Activated B cell treated with CpG ODN at 0.5 μM for 24 hours (primary cell): ENCODE measurements at regions of chr15 and their contacts with region 1.

Region 1: DNA sequence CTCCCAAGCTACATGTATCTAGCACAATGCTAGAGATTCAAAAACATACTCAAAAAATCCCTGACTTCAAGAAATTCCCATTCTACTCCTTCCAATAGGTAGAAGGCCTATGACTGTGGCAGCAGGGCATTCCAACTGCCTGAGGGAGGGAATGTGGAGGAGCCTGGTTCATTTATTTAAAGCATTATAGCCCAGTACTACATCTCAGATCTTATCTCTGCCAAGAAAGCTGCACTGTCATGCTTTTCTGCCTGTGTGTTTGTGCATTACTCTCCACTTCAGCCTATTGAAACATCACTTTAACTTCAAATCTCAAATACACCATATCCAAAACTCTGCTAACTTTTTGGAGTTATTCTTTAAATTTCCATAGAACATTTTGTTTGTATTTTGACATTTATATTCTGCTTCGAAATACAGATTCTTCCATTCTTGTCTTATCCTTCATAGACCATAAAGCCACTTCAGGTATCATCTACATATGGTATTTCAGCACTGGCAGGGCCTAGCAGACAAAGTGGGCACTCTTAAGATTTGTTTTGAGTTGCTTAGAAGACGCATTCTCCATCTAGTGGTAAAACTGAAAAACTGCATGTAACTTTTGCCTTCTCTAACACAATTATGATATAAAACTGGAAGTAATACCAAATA is 59.1 kb upstream of the NEDD4 start:
- DNase-seq: no peak
- ATAC-seq: peak; percentile 47
- H3K4me3 Mint-ChIP-seq: no peak overlapping the region
- H3K27ac Mint-ChIP-seq: no peak overlapping the region
- H3K4me1 Mint-ChIP-seq: no peaks in the 10 kb centered on the region
- H3K27me3 Mint-ChIP-seq: no peaks in the 10 kb centered on the region
- CTCF ChIP-seq: peak; percentile 82

Region 2: DNA sequence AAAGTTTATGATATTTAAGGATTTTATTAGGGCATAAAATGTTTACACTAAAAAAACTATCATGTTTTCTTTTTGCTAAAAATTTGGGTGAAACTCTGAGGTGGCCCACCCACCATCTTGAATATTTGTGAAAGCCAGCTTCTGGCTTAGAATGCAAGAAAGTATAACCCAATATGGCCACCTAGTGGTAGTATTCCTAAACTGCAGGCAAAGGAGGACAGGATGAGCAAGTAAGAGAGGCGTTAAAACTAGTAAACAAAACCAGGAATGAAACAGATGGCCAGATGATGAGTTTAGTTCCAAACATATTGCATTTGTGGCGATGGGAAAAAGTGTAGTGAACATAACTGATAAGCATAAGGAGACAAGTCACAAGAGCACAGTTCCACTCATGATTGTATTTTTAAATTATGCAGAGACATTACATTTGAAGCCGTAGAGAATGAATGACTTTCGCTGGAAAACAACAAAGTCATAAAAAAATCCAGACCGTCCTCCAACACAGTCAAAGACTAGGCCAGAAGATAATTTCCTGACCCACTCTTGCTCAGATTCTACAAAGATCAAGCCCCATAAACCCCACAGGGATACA is 206.3 kb before region 1 on chr15:
- CTCF ChIA-PET with region 1: no interaction called
- POLR2A ChIA-PET with region 1: no interaction called
- intact Hi-C with region 1: loop called (anchors 5 kb)
- DNase-seq: no peak
- ATAC-seq: no peak
- H3K4me3 Mint-ChIP-seq: no peak overlapping the region
- H3K27ac Mint-ChIP-seq: no peak overlapping the region
- H3K4me1 Mint-ChIP-seq: no peaks in the 10 kb centered on the region
- H3K27me3 Mint-ChIP-seq: no peaks in the 10 kb centered on the region
- CTCF ChIP-seq: peak; percentile 18

Region 3: GRCh38 chr15:56394909-56395308 is 342.4 kb after region 1 on chr15:
- CTCF ChIA-PET with region 1: no interaction called
- POLR2A ChIA-PET with region 1: no interaction called
- intact Hi-C with region 1: no loop called
- DNase-seq: no peak
- ATAC-seq: no peak
- H3K4me3 Mint-ChIP-seq: no peak overlapping the region
- H3K27ac Mint-ChIP-seq: no peak overlapping the region
- H3K4me1 Mint-ChIP-seq: peaks cover 2% of the 10 kb centered on the region
- H3K27me3 Mint-ChIP-seq: no peaks in the 10 kb centered on the region
- CTCF ChIP-seq: no peak